ENCODE measurements at regions of chr1 and their contacts with region 1.

Region 1: GRCh38 chr1:11858968-11859871 is 475 bp upstream of the NPPB start:
- DNase-seq: peak; percentile 70 to 85 (median 75)
- ATAC-seq: peak; percentile 49 to 86 (median 68)
- H3K4me3 ChIP-seq: peak overlapping the region in 7 of 12 donors; percentile 1 to 49 (median 25)
- H3K27ac ChIP-seq: peak overlapping the region in 2 of 12 donors; percentile 46 to 69
- H3K4me1 ChIP-seq: peaks cover 0 to 12% (median 0%) of the 10 kb centered on the region in 12 donors
- H3K27me3 ChIP-seq: peaks cover 12 to 43% (median 29%) of the 10 kb centered on the region in 9 donors
- CTCF ChIP-seq: peak in 5 of 12 donors; percentile 14 to 37 (median 22)
- POLR2A ChIP-seq: no peak

Region 2: GRCh38 chr1:11845641-11846335 is 13.4 kb before region 1 on chr1:
- intact Hi-C with region 1: loop called in 1 of 10 experiments (anchors 1 kb)
- DNase-seq: no peak
- ATAC-seq: no peak
- H3K4me3 ChIP-seq: peak overlapping the region in 5 of 12 donors; percentile 7 to 49 (median 28)
- H3K27ac ChIP-seq: no peak overlapping the region
- H3K4me1 ChIP-seq: peaks cover 0 to 35% (median 19%) of the 10 kb centered on the region in 12 donors
- H3K27me3 ChIP-seq: no peaks in the 10 kb centered on the region
- CTCF ChIP-seq: no peak
- POLR2A ChIP-seq: no peak

Region 3: GRCh38 chr1:11893907-11894251 is 34.7 kb after region 1 on chr1:
- intact Hi-C with region 1: loop called in 1 of 10 experiments (anchors 5 kb)
- DNase-seq: peak; percentile 72 to 85 (median 74)
- ATAC-seq: peak; percentile 81 to 94 (median 90)
- H3K4me3 ChIP-seq: no peak overlapping the region
- H3K27ac ChIP-seq: no peak overlapping the region
- H3K4me1 ChIP-seq: peaks cover 0 to 8% (median 0%) of the 10 kb centered on the region in 12 donors
- H3K27me3 ChIP-seq: peaks cover 2 to 37% (median 14%) of the 10 kb centered on the region in 9 donors
- CTCF ChIP-seq: peak; percentile 84 to 94 (median 88)
- POLR2A ChIP-seq: no peak

Region 4: GRCh38 chr1:12067900-12068821 is 208.9 kb after region 1 on chr1:
- intact Hi-C with region 1: no loop called
- DNase-seq: peak in 2 of 5 donors; percentile 24 to 46
- ATAC-seq: peak in 3 of 4 donors; percentile 41 to 74 (median 49)
- H3K4me3 ChIP-seq: no peak overlapping the region
- H3K27ac ChIP-seq: peak overlapping the region in 4 of 12 donors; percentile 20 to 64 (median 34)
- H3K4me1 ChIP-seq: peaks cover 0 to 15% (median 7%) of the 10 kb centered on the region in 12 donors
- H3K27me3 ChIP-seq: peaks cover 16 to 62% (median 48%) of the 10 kb centered on the region in 9 donors
- CTCF ChIP-seq: no peak
- POLR2A ChIP-seq: no peak